Caco-2 (cell line): ENCODE measurements at regions of chr1 and their contacts with region 1.

Region 1: GRCh38 chr1:201149400-201149799 is 4.9 kb downstream of the TMEM9 start:
- DNase-seq: peak in 1 of 2 experiments; percentile 55
- H3K4me3 ChIP-seq: no peak overlapping the region
- H3K4me3 Mint-ChIP-seq: no peak overlapping the region
- H3K27ac Mint-ChIP-seq: no peak overlapping the region
- H3K4me1 ChIP-seq: peaks cover 6% of the 10 kb centered on the region; the same call in 1 of the 2 replicates
- H3K4me1 Mint-ChIP-seq: no peaks in the 10 kb centered on the region
- H3K27me3 ChIP-seq: no peaks in the 10 kb centered on the region
- H3K27me3 Mint-ChIP-seq: no peaks in the 10 kb centered on the region
- CTCF ChIP-seq: peak; percentile 54 to 69

Region 2: GRCh38 chr1:201114236-201115131 is 34.9 kb before region 1 on chr1:
- CTCF ChIA-PET with region 1: no interaction called
- POLR2A ChIA-PET with region 1: no interaction called
- intact Hi-C with region 1: no loop called
- DNase-seq: peak; percentile 86 to 87
- H3K4me3 ChIP-seq: no peak overlapping the region
- H3K4me3 Mint-ChIP-seq: peak overlapping the region; percentile 24
- H3K27ac Mint-ChIP-seq: no peak overlapping the region
- H3K4me1 ChIP-seq: 0 out of 2 replicates have a peak, but pooled peaks cover 9% of the 10 kb centered on the region
- H3K4me1 Mint-ChIP-seq: peaks cover 15% of the 10 kb centered on the region
- H3K27me3 ChIP-seq: no peaks in the 10 kb centered on the region
- H3K27me3 Mint-ChIP-seq: no peaks in the 10 kb centered on the region
- CTCF ChIP-seq: peak; percentile 85 to 90

Region 3: DNA sequence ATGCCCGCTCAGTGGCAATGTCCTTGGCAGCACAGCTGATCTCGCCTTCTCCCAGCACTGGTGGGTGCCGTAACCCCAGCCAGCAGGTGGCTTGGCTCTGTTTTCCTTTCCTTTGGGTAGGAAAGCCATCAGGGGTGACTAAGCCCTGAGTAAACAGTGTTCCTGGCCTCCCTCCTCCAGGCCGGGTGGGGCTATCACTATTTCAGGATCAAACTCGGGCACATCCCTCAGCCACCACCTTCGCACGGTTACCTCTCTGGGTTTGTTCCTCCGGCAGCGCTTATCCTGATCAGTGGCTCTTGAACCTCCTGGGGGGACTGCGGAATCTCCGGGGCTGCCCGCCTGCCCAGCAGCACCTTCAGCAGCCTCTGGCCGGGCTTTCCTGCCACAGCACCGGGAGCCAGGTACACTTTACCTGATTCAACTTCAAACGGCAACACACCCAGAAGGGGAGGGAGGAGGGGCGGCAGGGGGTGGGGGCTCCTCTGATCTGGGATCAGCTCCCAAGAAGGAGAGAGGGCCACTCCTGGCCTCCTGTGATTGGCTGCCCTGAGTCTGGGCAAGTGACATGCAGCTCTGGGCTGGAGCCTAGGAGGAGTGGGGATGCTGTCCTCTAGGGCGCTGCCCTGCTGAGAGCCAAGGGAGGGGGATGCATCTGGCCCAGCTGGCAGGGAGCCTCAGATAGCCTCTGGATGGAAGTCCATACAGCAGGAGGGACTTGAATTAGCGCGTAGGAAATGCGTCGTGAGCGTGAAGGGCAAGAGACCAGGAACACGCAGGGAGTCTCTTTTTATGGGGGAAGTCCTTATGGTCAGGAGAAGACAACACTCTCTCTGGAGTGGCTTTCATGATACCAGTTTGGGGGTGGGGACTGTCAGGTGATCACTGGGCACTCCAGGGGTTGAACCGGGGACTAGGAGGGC is 22.3 kb before region 1 on chr1 and contains the start of gene ASCL5:
- CTCF ChIA-PET with region 1: no interaction called
- POLR2A ChIA-PET with region 1: no interaction called
- intact Hi-C with region 1: no loop called
- DNase-seq: peak in 1 of 2 experiments; percentile 29
- H3K4me3 ChIP-seq: no peak within 1 kb of the TSS
- H3K4me3 Mint-ChIP-seq: peak within 1 kb of the TSS; percentile 28
- H3K27ac Mint-ChIP-seq: no peak within 1 kb of the TSS
- H3K4me1 ChIP-seq: no peaks in the 10 kb centered on the region
- H3K4me1 Mint-ChIP-seq: no peaks in the 10 kb centered on the region
- H3K27me3 ChIP-seq: no peaks in the 10 kb centered on the region
- H3K27me3 Mint-ChIP-seq: peaks cover 3% of the 10 kb centered on the region
- CTCF ChIP-seq: no peak
- total RNA-seq, gene ASCL5: 0.26 and 0.48 TPM in 2 replicates

Region 4: GRCh38 chr1:201184307-201185122 is 35.1 kb after region 1 on chr1:
- CTCF ChIA-PET with region 1: interaction called, 6 read pairs
- POLR2A ChIA-PET with region 1: no interaction called
- intact Hi-C with region 1: loop called (anchors 1 kb)
- DNase-seq: peak; percentile 68 to 70
- H3K4me3 ChIP-seq: no peak overlapping the region
- H3K4me3 Mint-ChIP-seq: no peak overlapping the region
- H3K27ac Mint-ChIP-seq: no peak overlapping the region
- H3K4me1 ChIP-seq: no peaks in the 10 kb centered on the region
- H3K4me1 Mint-ChIP-seq: peaks cover 8% of the 10 kb centered on the region
- H3K27me3 ChIP-seq: no peaks in the 10 kb centered on the region; the same call in 1 of the 2 replicates
- H3K27me3 Mint-ChIP-seq: peaks cover 3% of the 10 kb centered on the region
- CTCF ChIP-seq: peak; percentile 69 to 86